ENCODE measurements at regions of chr10 and their contacts with region 1.

Region 1: GRCh38 chr10:103145860-103146466 is 47.1 kb downstream of the NT5C2 start:
- DNase-seq: peak; percentile 92
- ATAC-seq: peak; percentile 13
- H3K4me3 ChIP-seq: no peak overlapping the region
- H3K27ac ChIP-seq: no peak overlapping the region
- H3K4me1 ChIP-seq: peaks cover 17% of the 10 kb centered on the region
- H3K27me3 ChIP-seq: no peaks in the 10 kb centered on the region
- CTCF ChIP-seq: no peak
- POLR2A ChIP-seq: no peak
- RAD21 ChIP-seq: no peak

Region 2: GRCh38 chr10:102627736-102628293 is 518.1 kb before region 1 on chr10:
- CTCF ChIA-PET with region 1: no interaction called
- POLR2A ChIA-PET with region 1: no interaction called
- dilution Hi-C with region 1: no loop called
- in situ Hi-C with region 1: no loop called
- intact Hi-C with region 1: no loop called
- DNase-seq: peak; percentile 78
- ATAC-seq: peak; percentile 33
- H3K4me3 ChIP-seq: no peak overlapping the region
- H3K27ac ChIP-seq: peak overlapping the region; percentile 98
- H3K4me1 ChIP-seq: peaks cover 60% of the 10 kb centered on the region
- H3K27me3 ChIP-seq: no peaks in the 10 kb centered on the region
- CTCF ChIP-seq: no peak
- POLR2A ChIP-seq: peak; percentile 41; the same call in 1 of the 2 replicates
- RAD21 ChIP-seq: no peak

Region 3: GRCh38 chr10:103111031-103111917 is 34.7 kb before region 1 on chr10:
- CTCF ChIA-PET with region 1: no interaction called
- POLR2A ChIA-PET with region 1: no interaction called
- dilution Hi-C with region 1: no loop called
- in situ Hi-C with region 1: no loop called
- intact Hi-C with region 1: loop called (anchors 5 kb)
- DNase-seq: peak; percentile 44
- ATAC-seq: peak; percentile 86
- H3K4me3 ChIP-seq: no peak overlapping the region
- H3K27ac ChIP-seq: no peak overlapping the region
- H3K4me1 ChIP-seq: peaks cover 3% of the 10 kb centered on the region; the same call in 1 of the 2 replicates
- H3K27me3 ChIP-seq: no peaks in the 10 kb centered on the region
- CTCF ChIP-seq: no peak
- POLR2A ChIP-seq: no peak
- RAD21 ChIP-seq: no peak

Region 4: DNA sequence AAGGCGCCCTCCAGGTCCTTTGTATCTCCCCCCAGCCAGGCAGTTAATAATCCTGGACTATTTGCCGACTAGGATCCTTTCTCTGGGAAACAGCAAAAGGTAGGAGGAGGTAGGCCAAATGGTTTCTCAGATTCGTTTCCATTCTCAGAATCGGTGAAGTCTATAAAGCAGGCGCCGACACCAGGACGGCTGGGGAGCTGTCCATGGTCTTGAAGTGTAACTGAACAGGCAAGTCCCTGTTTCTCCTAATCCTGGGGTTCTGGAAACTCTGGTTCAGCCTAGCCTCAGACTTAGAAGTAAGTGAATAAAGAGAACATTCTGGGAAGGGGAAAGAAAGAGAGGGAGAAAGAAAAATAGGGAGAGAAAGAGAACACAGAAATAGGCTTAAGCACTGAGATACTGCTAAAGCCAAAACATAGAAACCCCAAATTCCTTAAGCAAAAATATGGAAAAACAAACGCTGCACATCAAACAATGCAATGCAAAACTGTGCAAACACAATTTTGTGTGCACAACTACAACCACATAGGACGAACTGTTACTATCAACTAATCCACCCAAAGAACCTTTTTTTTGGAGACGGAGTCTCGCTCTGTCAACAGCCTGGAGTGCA is 119.9 kb after region 1 on chr10:
- CTCF ChIA-PET with region 1: no interaction called
- POLR2A ChIA-PET with region 1: no interaction called
- dilution Hi-C with region 1: no loop called
- in situ Hi-C with region 1: no loop called
- intact Hi-C with region 1: no loop called
- DNase-seq: peak; percentile 82
- ATAC-seq: peak; percentile 95
- H3K4me3 ChIP-seq: no peak overlapping the region
- H3K27ac ChIP-seq: no peak overlapping the region
- H3K4me1 ChIP-seq: no peaks in the 10 kb centered on the region
- H3K27me3 ChIP-seq: peaks cover 2% of the 10 kb centered on the region; the same call in 1 of the 2 replicates
- CTCF ChIP-seq: no peak
- POLR2A ChIP-seq: no peak
- RAD21 ChIP-seq: no peak